H1 (cell line): ENCODE measurements at regions of chrX and their contacts with region 1.

Region 1: GRCh38 chrX:151359931-151360871 is 36.8 kb upstream of the VMA21 start:
- DNase-seq: peak in 1 of 2 experiments; percentile 79
- H3K4me3 ChIP-seq: peak overlapping the region in 2 of 4 experiments; percentile 9 to 48; a peak in 4 of 8 replicates
- H3K27ac ChIP-seq: no peak overlapping the region
- H3K4me1 ChIP-seq: peaks cover 0 to 5% (median 3%) of the 10 kb centered on the region in 4 experiments; a peak in 3 of 7 replicates
- H3K27me3 ChIP-seq: no peaks in the 10 kb centered on the region
- CTCF ChIP-seq: peak; percentile 59 to 63 (median 63)
- EP300 ChIP-seq: no peak
- POLR2A ChIP-seq: no peak
- RAD21 ChIP-seq: peak; percentile 76 to 85

Region 2: GRCh38 chrX:151155217-151155616 is 205.0 kb before region 1 on chrX:
- CTCF ChIA-PET with region 1: interaction called, 11 read pairs
- POLR2A ChIA-PET with region 1: no interaction called
- DNase-seq: no peak
- H3K4me3 ChIP-seq: no peak overlapping the region
- H3K27ac ChIP-seq: no peak overlapping the region
- H3K4me1 ChIP-seq: peaks cover 2 to 3% (median 3%) of the 10 kb centered on the region in 4 experiments; a peak in 4 of 7 replicates
- H3K27me3 ChIP-seq: peaks cover 0 to 23% (median 11%) of the 10 kb centered on the region in 4 experiments; a peak in 6 of 7 replicates
- CTCF ChIP-seq: no peak
- EP300 ChIP-seq: no peak
- POLR2A ChIP-seq: no peak
- RAD21 ChIP-seq: no peak

Region 3: DNA sequence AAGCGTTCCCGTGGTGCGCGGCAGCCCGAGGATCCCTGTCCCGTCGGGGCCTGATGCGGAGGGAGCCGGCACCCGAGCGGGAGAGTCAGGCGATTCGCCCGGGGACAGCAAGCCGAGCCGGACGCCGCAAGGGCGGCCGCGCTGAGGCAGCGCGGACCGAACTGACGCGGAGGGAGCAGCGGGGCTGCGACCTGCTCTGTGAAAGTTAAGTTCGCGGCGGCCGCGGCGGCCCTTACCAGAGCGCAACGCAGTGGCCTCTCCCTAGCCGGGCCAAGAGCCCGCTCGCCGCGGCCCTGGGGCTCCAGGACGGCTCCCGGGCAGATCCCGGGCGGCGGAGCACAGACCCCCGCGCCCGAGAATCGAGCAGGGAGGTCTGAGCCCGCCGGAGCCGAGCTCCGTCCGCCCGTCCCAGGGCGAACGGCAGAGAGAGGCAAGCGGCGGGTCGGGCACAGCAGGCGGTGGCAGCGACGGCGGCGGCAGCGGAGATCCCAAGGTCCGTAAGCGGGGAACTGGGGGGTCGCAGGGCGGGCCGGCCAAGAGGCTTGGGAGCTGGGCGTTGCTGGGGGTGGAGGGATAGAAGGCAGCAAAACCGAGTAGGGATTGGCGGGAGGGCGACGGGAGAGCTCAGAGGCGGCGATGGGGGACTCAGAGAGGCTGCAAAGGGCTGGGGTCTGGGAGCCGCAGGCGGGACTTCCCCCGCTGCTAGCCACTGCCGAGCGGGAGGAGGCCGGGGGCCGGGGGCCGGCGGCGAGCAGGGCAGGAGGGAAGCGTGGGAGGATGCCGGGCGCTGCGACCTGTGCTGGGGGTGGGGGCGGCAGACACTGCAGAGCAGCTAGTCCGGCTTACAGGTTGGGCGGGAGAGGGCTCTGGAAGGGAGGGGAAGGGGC is 182.8 kb before region 1 on chrX:
- CTCF ChIA-PET with region 1: interaction called, 13 read pairs
- POLR2A ChIA-PET with region 1: no interaction called
- DNase-seq: peak in 1 of 2 experiments; percentile 66
- H3K4me3 ChIP-seq: peak overlapping the region; percentile 46 to 72 (median 50)
- H3K27ac ChIP-seq: no peak overlapping the region
- H3K4me1 ChIP-seq: peaks cover 0 to 6% (median 0%) of the 10 kb centered on the region in 4 experiments; a peak in 4 of 7 replicates
- H3K27me3 ChIP-seq: peaks cover 13 to 42% (median 32%) of the 10 kb centered on the region in 4 experiments
- CTCF ChIP-seq: no peak
- EP300 ChIP-seq: no peak
- POLR2A ChIP-seq: no peak
- RAD21 ChIP-seq: no peak; a peak in 1 of 4 replicates

Region 4: GRCh38 chrX:151323054-151323453 is 37.1 kb before region 1 on chrX:
- CTCF ChIA-PET with region 1: no interaction called
- POLR2A ChIA-PET with region 1: no interaction called
- DNase-seq: no peak
- H3K4me3 ChIP-seq: no peak overlapping the region
- H3K27ac ChIP-seq: no peak overlapping the region
- H3K4me1 ChIP-seq: no peaks in the 10 kb centered on the region
- H3K27me3 ChIP-seq: no peaks in the 10 kb centered on the region
- CTCF ChIP-seq: no peak
- EP300 ChIP-seq: no peak
- POLR2A ChIP-seq: no peak
- RAD21 ChIP-seq: no peak